ENCODE measurements at regions of chr17 and their contacts with region 1.

Region 1: GRCh38 chr17:34156741-34157589 is 98.1 kb upstream of the CCL2 start:
- DNase-seq: no peak
- ATAC-seq: no peak
- H3K4me3 Mint-ChIP-seq: no peak overlapping the region
- H3K27ac Mint-ChIP-seq: no peak overlapping the region
- H3K4me1 Mint-ChIP-seq: peaks cover 10% of the 10 kb centered on the region
- H3K27me3 Mint-ChIP-seq: peaks cover 66% of the 10 kb centered on the region

Region 2: GRCh38 chr17:34171245-34171818 is 14.4 kb after region 1 on chr17:
- CTCF ChIA-PET with region 1: interaction called, 11 read pairs
- POLR2A ChIA-PET with region 1: no interaction called
- DNase-seq: peak; percentile 78
- ATAC-seq: peak; percentile 73
- H3K4me3 Mint-ChIP-seq: no peak overlapping the region
- H3K27ac Mint-ChIP-seq: no peak overlapping the region
- H3K4me1 Mint-ChIP-seq: peaks cover 8% of the 10 kb centered on the region
- H3K27me3 Mint-ChIP-seq: peaks cover 6% of the 10 kb centered on the region